CD8-positive, alpha-beta T cell (primary cell): ENCODE measurements at regions of chr2 and their contacts with region 1.

Region 1: DNA sequence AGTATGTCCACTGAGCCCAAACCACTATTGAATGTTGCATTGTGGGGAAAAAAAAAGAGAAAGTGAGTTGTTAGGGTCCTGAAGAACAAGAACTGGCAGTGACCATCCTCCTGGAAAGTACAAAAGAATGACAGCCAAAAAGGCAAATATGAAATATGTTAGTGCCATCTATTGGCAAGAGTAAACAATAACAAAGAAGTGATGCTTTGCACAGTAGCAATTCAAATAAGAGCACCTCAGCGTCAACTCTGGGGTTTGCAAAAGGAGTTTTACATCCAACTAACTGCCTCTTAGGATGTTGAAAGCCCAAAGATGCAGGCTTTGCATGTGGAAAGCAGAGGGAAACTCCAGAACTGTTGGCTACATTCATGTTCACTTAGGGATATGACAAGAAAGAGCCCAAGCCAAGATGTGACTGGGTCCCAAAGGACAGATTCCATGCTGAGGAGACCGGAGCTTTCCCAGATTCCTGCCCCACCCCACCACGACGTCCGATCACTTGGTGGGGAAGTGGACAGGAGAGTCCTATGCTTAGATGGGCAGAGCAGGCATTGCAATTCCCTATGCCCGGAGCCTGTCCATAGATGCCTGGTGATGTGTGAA is 15.6 kb downstream of the TRABD2A start:
- DNase-seq: peak in 3 of 9 experiments; percentile 49 to 73 (median 60)
- ATAC-seq: peak; percentile 57
- H3K4me3 ChIP-seq: no peak overlapping the region
- H3K4me3 Mint-ChIP-seq: peak overlapping the region; percentile 61
- H3K27ac ChIP-seq: no peak overlapping the region
- H3K27ac Mint-ChIP-seq: peak overlapping the region; percentile 91
- H3K4me1 ChIP-seq: peaks cover 80% of the 10 kb centered on the region
- H3K4me1 Mint-ChIP-seq: peaks cover 85% of the 10 kb centered on the region
- H3K27me3 ChIP-seq: no peaks in the 10 kb centered on the region
- H3K27me3 Mint-ChIP-seq: no peaks in the 10 kb centered on the region
- CTCF ChIP-seq: peak; percentile 72

Region 2: DNA sequence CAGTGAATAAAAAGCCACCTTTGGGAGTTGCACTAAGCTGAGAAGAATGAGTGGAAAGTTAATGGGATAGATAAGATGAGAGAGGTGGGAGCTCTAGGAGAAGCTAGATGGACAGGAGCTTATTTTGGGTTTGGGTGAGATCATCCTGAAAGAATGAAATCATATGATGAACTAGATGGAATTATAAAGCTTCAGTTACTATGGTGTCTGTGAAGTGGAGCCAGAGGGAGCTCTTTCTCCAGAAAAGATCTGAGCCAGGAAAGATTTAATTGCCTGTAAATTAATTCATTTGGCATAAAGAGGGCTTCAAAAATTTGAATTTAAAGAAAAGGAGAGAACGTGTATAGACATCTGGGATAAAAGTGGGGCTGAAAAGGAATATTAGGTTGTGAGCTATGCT is 338.7 kb before region 1 on chr2:
- CTCF ChIA-PET with region 1: interaction called, 13 read pairs
- POLR2A ChIA-PET with region 1: no interaction called
- intact Hi-C with region 1: loop called in 1 of 2 experiments (anchors 1 kb)
- DNase-seq: peak in 2 of 9 experiments; percentile 24 to 37
- ATAC-seq: no peak
- H3K4me3 ChIP-seq: no peak overlapping the region
- H3K4me3 Mint-ChIP-seq: no peak overlapping the region
- H3K27ac ChIP-seq: no peak overlapping the region
- H3K27ac Mint-ChIP-seq: peak overlapping the region; percentile 60
- H3K4me1 ChIP-seq: peaks cover 14% of the 10 kb centered on the region
- H3K4me1 Mint-ChIP-seq: peaks cover 15% of the 10 kb centered on the region
- H3K27me3 ChIP-seq: no peaks in the 10 kb centered on the region
- H3K27me3 Mint-ChIP-seq: no peaks in the 10 kb centered on the region
- CTCF ChIP-seq: no peak

Region 3: GRCh38 chr2:84686783-84687476 is 178.4 kb before region 1 on chr2:
- CTCF ChIA-PET with region 1: no interaction called
- POLR2A ChIA-PET with region 1: no interaction called
- intact Hi-C with region 1: loop called in 1 of 2 experiments (anchors 2 kb)
- DNase-seq: peak in 1 of 9 experiments; percentile 38
- ATAC-seq: peak; percentile 42
- H3K4me3 ChIP-seq: no peak overlapping the region
- H3K4me3 Mint-ChIP-seq: peak overlapping the region; percentile 38
- H3K27ac ChIP-seq: no peak overlapping the region
- H3K27ac Mint-ChIP-seq: peak overlapping the region; percentile 85
- H3K4me1 ChIP-seq: peaks cover 36% of the 10 kb centered on the region
- H3K4me1 Mint-ChIP-seq: peaks cover 51% of the 10 kb centered on the region
- H3K27me3 ChIP-seq: no peaks in the 10 kb centered on the region
- H3K27me3 Mint-ChIP-seq: no peaks in the 10 kb centered on the region
- CTCF ChIP-seq: no peak

Region 4: GRCh38 chr2:84701895-84702294 is 163.4 kb before region 1 on chr2:
- CTCF ChIA-PET with region 1: no interaction called
- POLR2A ChIA-PET with region 1: no interaction called
- intact Hi-C with region 1: no loop called
- DNase-seq: no peak
- ATAC-seq: no peak
- H3K4me3 ChIP-seq: no peak overlapping the region
- H3K4me3 Mint-ChIP-seq: no peak overlapping the region
- H3K27ac ChIP-seq: no peak overlapping the region
- H3K27ac Mint-ChIP-seq: no peak overlapping the region
- H3K4me1 ChIP-seq: peaks cover 12% of the 10 kb centered on the region
- H3K4me1 Mint-ChIP-seq: peaks cover 22% of the 10 kb centered on the region
- H3K27me3 ChIP-seq: no peaks in the 10 kb centered on the region
- H3K27me3 Mint-ChIP-seq: no peaks in the 10 kb centered on the region
- CTCF ChIP-seq: no peak

Region 5: GRCh38 chr2:84781942-84782716 is 83.2 kb before region 1 on chr2:
- CTCF ChIA-PET with region 1: interaction called, 4 read pairs
- POLR2A ChIA-PET with region 1: interaction called, 3 read pairs
- intact Hi-C with region 1: loop called in 1 of 2 experiments (anchors 5 kb)
- DNase-seq: peak; percentile 4 to 86 (median 64)
- ATAC-seq: peak; percentile 88
- H3K4me3 ChIP-seq: peak overlapping the region in 1 of 2 experiments; percentile 2
- H3K4me3 Mint-ChIP-seq: peak overlapping the region; percentile 39
- H3K27ac ChIP-seq: peak overlapping the region; percentile 42 to 80
- H3K27ac Mint-ChIP-seq: peak overlapping the region; percentile 89
- H3K4me1 ChIP-seq: peaks cover 69% of the 10 kb centered on the region
- H3K4me1 Mint-ChIP-seq: peaks cover 85% of the 10 kb centered on the region
- H3K27me3 ChIP-seq: no peaks in the 10 kb centered on the region
- H3K27me3 Mint-ChIP-seq: no peaks in the 10 kb centered on the region
- CTCF ChIP-seq: no peak